Lower leg skin (tissue), 4 donors: ENCODE measurements at regions of chr15 and their contacts with region 1.

Region 1: DNA sequence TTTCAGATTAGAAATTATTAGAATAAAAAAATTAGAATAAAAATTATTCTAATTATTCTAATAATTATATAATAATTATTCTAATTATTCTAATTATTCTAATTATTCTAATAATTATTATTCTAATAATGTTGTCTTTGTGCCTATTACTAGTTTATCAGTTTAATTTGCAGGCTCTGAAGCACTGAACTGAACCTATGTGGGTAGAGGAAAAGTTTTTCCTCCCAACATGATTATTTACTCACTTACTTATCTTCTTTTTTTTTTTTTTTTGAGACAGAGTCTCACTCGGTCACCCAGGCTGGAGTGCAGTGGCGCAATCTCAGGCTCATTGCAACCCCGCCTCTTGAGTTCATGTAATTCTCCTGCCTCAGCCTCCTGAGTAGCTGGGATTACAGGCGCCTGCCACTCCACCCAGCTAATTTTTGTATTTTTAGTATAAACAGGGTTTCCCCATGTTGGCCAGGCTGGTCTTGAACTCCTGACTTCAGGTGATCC is 39.7 kb upstream of the C15orf39 start:
- DNase-seq: no peak
- H3K4me3 ChIP-seq: no peak overlapping the region
- CTCF ChIP-seq: no peak
- POLR2A ChIP-seq: no peak

Region 2: DNA sequence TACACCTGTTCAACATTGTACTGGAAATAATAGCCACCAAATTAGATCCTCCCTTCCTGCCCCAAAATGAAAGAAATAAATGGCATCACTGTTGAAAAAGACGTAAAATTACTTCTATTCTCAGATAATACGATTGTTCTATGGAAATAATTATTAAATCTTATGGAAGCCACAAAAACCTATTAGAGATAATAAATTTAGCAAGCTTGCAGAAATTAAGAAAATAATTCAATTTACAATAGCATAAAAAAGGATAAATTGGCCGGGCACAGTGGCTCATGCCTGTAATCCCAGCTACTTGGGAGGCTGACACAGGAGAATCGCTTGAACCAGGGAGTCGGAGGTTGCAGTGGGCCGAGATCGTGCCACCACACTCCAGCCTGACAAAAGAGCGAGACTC is 80.8 kb before region 1 on chr15:
- intact Hi-C with region 1: loop called (anchors 2 kb)
- DNase-seq: no peak
- H3K4me3 ChIP-seq: no peak overlapping the region
- CTCF ChIP-seq: no peak
- POLR2A ChIP-seq: no peak